Dorsolateral prefrontal cortex (tissue), 120 donors: ENCODE measurements at regions of chr1 and their contacts with region 1.

Region 1: DNA sequence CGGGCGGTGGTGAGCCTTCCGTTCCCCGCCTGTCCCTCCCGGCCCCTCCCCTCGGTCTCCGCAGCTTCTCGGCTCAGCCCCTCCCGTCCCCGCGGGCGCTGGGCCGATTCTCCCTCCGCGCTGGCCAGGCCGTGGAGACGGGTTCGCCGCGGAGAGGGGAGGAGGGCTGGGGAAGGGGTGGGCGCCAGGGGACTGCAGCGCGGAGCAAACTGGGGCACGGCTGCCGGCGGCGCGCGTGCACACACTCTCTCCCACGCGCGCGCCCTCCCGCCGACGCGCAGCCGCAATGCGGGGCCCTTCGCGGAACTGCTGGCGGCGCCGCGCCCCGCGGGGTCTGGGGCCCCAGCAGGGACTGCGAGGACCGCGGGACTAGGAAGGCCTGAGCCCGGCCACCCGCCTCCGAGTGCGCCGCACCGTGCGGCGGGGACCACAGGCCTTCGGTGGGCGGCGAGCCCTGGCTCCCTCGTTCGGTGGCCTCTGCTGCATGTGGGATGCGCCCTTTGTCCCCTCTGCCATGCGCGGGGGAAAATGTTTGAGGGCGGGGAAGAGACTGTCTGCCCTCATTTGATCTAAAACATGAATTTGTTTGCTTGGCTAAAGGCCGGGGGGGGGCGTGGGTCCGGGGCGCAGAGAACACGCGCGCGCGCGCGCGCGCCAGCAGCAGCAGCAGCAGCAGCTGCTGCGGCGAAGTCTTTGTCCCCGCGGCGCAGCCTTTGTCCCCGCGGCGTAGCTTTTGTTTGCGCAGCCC is 90.7 kb upstream of the VAMP3 start:
- DNase-seq: peak; percentile 53 to 83 (median 69)
- H3K4me3 ChIP-seq: peak overlapping the region; percentile 65 to 91 (median 77)
- H3K27ac ChIP-seq: peak overlapping the region; percentile 51 to 97 (median 92)
- H3K27me3 ChIP-seq: no peaks in the 10 kb centered on the region
- CTCF ChIP-seq: peak in 9 of 56 donors; percentile 4 to 32 (median 13)

Region 2: DNA sequence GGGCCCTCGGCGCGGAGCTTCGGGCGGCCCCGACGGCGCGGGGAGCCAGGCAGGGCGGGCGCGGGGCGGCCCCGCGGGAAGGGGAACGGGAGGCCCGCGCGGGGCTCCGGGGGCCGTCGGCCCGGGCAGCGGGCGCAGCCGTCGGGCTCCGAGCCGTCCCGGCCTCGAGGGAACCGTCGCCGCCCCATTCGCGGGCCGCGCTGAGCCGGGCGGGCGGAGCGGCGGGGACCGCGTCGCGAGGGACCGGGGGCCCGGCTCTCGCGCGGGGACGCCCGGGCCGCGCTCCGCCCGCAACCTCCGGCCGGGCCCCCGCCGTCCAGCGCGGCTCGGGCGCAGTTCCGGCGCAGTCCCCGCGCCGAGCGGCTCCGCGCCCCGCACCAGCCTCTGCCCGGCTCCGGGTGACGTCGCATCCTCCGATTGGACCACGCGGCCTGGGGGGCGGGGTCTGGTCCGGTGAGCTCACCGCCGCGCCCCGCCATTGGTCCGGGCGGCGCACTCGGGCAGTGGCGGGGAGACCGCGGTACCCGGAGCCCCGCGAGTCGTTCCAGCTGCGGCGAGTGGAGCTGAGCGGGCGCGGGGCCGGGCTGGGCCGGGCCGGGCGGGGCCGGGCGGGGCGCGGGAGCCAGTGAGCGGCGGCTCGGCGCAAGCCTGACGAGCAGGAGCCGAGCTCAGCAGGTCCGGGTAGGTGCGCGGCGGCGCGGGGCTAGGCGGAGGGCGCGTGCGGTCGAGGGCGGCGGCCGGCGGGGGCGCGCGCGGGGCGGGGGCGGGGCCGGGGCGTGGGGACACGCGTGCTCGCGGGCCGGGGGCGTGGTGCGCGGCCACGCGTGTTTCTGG is 24.1 kb after region 1 on chr1:
- intact Hi-C with region 1: loop called in 1 of 2 experiments (anchors 1 kb)
- DNase-seq: peak; percentile 93 to 99 (median 96)
- H3K4me3 ChIP-seq: peak overlapping the region in 58 of 59 donors; percentile 52 to 83 (median 72)
- H3K27ac ChIP-seq: peak overlapping the region in 40 of 59 donors; percentile 47 to 90 (median 84)
- H3K27me3 ChIP-seq: no peaks in the 10 kb centered on the region
- CTCF ChIP-seq: no peak

Region 3: DNA sequence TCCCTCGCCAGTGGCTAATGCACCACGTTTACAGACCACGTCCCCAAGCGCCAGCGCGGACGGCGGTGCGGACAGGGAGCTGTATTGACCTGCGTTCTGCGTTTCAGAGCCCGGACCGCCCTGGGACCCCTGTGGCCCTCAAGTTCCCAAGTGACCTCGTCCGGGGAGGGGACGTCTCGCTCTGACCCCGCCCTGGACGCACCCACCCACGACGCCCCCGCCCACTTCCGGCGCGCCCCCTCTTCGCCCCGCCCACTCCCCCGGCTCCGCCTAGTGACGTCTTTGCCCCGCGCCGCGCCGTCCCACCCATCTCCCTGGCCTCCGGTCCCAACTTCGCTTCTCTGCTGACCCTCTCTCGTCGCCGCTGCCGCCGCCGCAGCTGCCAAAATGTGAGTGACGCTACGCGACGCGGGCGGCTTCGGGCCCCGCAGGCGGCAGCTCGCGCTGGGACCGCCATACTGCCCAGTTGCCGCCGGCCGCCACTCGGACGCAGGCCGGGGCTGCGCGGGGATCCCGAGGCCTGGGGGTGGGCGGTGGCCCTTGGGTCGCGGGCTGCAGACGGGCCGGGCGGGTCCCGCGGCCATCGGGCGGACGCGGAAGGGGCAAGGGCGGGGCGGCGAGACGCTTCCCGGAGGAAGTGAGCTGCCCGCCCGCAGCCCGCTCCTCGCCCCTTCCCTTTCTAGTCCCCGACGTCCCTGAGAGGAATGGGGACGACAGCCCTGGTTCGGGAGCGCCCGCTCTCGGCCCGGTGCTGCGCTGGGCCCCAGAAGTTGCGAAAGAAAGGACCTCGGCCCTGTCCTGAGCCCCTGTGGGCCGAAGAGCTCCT is 90.8 kb after region 1 on chr1 and contains the start of gene VAMP3:
- intact Hi-C with region 1: loop called in 1 of 2 experiments (anchors 5 kb)
- DNase-seq: peak; percentile 72 to 92 (median 86)
- H3K4me3 ChIP-seq: peak within 1 kb of the TSS; percentile 72 to 98 (median 90)
- H3K27ac ChIP-seq: peak within 1 kb of the TSS; percentile 72 to 97 (median 92)
- H3K27me3 ChIP-seq: no peaks in the 10 kb centered on the region
- CTCF ChIP-seq: peak in 11 of 56 donors; percentile 10 to 37 (median 18)
- total RNA-seq, gene VAMP3: 51.7 to 189 (median 84.7) TPM

Region 4: DNA sequence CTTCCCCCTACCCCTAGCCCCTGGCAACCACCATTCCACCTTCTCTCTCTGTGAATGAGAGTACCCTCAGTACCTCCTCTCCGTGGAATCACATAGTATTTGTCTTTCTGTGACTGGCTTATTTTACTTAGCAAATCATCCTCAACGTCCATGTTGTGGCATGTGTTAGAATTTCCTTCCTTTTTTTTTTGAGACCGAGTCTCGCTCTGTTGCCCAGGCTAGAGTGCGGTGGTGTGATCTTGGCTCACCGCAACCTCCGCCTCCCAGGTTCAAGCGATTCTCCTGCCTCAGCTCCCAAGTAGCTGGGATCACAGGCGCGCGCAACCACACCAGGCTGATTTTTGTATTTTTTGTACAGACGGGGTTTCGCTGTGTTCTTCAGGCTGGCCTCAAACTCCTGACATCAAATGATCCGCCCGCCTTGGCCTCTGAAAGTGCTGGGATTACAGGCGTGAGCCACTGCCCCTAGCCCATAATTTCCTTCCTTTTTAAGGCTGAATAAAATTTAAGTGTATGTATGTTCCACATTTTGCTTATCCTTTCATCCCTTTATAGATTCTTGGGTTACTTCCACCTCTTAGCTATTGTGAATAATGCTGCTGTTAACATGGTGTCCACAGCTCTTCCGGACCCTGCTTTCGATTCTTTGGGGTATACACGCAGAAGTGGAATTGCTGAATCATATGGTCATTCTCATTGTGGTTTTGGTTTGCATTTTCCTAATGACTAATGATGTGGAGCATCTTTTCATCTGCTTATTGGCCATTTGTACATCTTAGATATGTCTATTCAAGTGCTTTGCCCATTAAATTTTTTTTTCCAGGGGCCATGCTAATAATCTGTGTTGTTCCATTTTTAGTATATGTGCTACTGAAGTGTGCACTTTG is 313.5 kb after region 1 on chr1:
- intact Hi-C with region 1: no loop called
- DNase-seq: no peak
- H3K4me3 ChIP-seq: no peak overlapping the region
- H3K27ac ChIP-seq: no peak overlapping the region
- H3K27me3 ChIP-seq: no peaks in the 10 kb centered on the region
- CTCF ChIP-seq: no peak